Keratinocyte (primary cell): ENCODE measurements at regions of chr10 and their contacts with region 1.

Region 1: DNA sequence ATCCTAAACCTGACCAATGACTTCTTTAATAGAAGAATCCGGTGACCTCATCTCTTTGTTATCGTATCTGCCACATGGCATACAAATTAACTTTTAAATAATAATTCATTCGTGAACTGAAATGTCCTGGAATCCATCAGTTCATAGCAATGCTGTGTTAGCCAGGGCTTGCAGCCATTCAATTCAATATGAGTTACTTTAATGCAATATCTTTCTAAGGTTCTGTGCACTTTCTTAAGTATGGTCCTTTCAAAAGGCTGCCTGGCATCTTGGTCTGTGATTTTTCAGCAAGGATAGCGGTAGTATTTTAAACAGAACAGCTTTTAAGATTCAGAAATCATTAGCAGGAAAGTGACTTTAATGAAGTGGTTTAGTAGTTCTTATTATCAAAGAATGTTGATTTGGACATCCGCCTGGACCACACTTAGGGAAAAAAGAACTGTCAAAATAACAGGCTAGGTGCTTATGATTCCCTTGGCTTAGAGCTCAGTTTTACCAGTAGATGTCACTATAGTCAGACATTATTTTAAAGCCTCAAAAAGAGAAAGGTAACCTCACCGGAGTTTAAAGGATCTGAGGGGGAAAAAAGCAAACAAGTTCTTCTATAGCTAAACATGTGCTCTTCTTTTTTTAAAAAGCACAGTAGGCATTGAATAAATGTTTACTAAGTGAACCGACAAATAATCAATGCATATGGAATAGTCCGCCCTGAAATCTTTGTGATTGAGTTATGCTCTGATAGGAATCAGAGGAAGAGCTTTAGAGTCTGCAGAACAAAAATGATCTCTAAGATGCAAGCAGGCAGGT is 22.7 kb downstream of the SLC35G1 start:
- DNase-seq: no peak
- H3K4me3 ChIP-seq: no peak overlapping the region
- H3K27ac ChIP-seq: no peak overlapping the region
- H3K4me1 ChIP-seq: no peaks in the 10 kb centered on the region
- H3K27me3 ChIP-seq: no peaks in the 10 kb centered on the region
- CTCF ChIP-seq: peak in 2 of 3 experiments; percentile 36 to 55

Region 2: GRCh38 chr10:93991114-93991513 is 74.7 kb after region 1 on chr10:
- dilution Hi-C with region 1: no loop called
- DNase-seq: no peak
- H3K4me3 ChIP-seq: no peak overlapping the region
- H3K27ac ChIP-seq: no peak overlapping the region
- H3K4me1 ChIP-seq: no peaks in the 10 kb centered on the region
- H3K27me3 ChIP-seq: peaks cover 35% of the 10 kb centered on the region
- CTCF ChIP-seq: no peak

Region 3: DNA sequence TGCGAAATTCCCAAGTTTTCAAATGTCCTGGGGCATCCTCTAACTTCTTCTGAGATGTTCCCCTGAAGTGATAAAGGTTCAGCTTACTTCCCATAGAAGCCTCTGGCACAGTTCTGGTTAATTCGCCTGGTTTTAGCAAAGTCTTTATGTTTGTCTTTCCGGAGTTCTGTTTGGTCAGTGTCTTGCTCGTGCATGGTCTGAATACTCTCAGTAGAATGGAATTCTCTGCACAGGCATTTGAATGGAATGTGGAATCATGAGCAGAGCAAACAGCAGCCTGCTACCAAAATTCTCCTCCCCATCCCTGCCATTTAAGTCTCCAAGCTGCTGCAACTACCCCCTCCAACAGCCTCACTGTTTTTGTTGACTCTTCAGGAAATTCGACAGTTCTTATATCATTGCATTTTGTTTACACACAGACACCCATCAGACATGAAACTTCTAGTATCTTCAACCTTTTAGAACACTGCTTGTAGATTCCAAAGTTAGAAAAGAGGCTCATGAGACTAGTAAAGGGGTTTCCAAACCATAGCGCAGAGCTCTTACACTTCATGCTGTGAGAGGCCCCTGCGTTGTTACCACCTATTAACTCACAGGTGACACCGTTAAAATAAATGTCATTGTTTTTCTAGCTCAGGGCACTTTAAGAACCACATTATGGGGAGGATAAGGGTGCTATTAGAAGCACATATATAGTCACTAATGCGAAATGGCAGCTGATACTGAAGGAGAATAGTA is 207.0 kb after region 1 on chr10:
- dilution Hi-C with region 1: no loop called
- DNase-seq: no peak
- H3K4me3 ChIP-seq: no peak overlapping the region
- H3K27ac ChIP-seq: no peak overlapping the region
- H3K4me1 ChIP-seq: peaks cover 13% of the 10 kb centered on the region
- H3K27me3 ChIP-seq: no peaks in the 10 kb centered on the region
- CTCF ChIP-seq: no peak

Region 4: DNA sequence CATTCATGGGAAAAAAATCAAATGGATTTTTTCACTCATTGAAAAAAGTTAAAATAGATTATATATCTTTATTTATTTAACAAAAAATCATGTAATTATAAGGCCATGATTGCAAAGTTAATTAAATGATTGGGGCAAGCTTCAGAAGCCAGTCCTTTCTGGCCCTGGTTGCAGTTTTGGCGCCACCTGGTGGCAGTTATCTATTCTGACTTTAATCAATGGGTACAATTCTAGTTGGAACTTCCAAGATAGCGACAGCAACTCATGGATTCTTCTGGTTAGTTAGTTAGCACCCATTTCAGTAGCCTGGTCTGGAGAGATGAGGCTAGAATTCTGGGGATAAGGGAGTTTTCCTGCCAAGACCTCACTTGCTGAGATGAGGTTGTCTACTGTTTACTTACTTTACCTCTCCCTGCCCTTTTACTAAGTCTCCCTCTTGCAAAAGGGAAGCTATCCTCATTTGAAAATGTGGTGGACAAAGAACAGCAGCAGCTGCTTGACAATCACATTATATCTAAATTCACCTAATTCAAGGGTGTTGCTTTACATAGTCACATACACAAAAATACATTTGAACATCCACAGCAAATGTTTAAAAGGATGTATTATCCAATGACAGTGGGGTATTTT is 403.9 kb after region 1 on chr10:
- dilution Hi-C with region 1: loop called (anchors 25 kb)
- DNase-seq: peak; percentile 5
- H3K4me3 ChIP-seq: no peak overlapping the region
- H3K27ac ChIP-seq: no peak overlapping the region
- H3K4me1 ChIP-seq: no peaks in the 10 kb centered on the region
- H3K27me3 ChIP-seq: no peaks in the 10 kb centered on the region
- CTCF ChIP-seq: peak; percentile 58 to 71 (median 70)